IMR-90 (cell line): ENCODE measurements at regions of chr5 and their contacts with region 1.

Region 1: DNA sequence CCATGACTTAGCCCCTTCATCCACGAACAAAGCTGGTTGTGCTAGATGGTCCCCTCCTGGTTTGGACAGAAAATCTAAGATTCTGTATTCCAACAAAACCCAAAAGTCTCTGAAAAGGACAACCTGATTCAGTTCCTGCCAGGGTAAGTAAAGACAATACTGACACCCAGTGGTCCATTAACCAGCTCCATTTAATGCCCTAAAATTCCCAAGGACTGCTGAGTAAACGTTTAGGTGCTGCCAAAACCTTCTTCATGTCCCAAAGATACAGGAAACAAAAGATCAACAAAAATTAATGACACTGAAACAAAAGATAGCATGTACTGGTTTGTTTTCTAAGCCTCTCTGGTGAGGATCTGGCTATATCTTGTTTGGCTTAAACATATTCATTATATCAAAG is 25.3 kb upstream of the PPP1R2B start:
- DNase-seq: peak; percentile 58
- ATAC-seq: peak; percentile 86
- H3K4me3 ChIP-seq: no peak overlapping the region
- H3K27ac ChIP-seq: no peak overlapping the region
- H3K4me1 ChIP-seq: no peaks in the 10 kb centered on the region; the same call in 1 of the 2 replicates
- H3K27me3 ChIP-seq: no peaks in the 10 kb centered on the region; the same call in 1 of the 2 replicates
- CTCF ChIP-seq: peak; percentile 74
- POLR2A ChIP-seq: no peak
- RAD21 ChIP-seq: peak; percentile 78

Region 2: DNA sequence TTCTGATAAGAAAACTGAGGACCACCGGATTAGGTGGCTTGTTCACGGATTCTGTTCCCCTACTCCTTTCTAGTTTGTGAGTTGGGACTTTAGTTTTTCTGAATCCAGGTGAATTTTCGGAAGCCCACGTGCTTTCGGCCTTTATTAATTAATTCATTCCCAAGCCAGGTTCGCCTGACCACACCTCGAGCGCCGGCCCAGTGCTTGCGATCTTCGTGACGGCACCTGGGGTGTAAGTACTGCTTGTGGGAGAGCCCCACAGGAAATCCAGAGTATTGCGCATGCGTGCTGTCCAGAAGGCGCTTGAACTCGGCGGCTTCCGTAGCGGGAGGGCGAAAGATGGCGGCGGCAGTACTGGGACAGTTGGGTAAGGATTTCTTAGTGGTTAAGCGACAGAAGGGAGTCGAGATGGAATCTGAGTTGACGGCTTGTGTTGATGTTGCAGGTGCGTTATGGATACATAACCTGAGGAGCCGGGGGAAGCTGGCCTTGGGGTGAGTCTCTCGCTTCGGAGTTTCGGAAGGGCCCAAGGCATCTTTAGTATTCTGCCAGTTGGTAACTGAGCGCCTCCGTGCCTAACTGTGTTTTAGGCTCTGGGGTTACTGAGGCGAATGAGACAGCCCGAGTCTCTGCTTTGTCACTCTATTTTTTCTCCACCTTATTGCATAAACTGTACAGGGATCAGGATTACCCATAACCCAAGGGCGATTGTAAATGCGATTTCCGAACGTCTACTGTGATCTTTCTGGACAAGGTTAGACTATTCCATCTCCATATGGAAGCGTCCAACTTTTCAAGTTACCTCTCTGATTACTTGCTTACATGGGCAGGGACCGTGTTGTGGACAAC is 1883.8 kb before region 1 on chr5 and contains the start of gene MRPL22:
- CTCF ChIA-PET with region 1: no interaction called
- POLR2A ChIA-PET with region 1: no interaction called
- dilution Hi-C with region 1: no loop called
- in situ Hi-C with region 1: no loop called
- intact Hi-C with region 1: loop called (anchors 10 kb)
- DNase-seq: peak; percentile 93
- ATAC-seq: peak; percentile 60
- H3K4me3 ChIP-seq: peak within 1 kb of the TSS; percentile 86
- H3K27ac ChIP-seq: peak within 1 kb of the TSS; percentile 84
- H3K4me1 ChIP-seq: peaks cover 2% of the 10 kb centered on the region
- H3K27me3 ChIP-seq: no peaks in the 10 kb centered on the region
- CTCF ChIP-seq: no peak
- POLR2A ChIP-seq: 0 out of 2 replicates have a peak, but pooled peaks have one; percentile 48
- RAD21 ChIP-seq: no peak
- total RNA-seq, gene MRPL22: 13.3 and 21.7 TPM in 2 replicates

Region 3: GRCh38 chr5:154972476-154973080 is 1852.2 kb before region 1 on chr5:
- CTCF ChIA-PET with region 1: interaction called, 4 read pairs
- POLR2A ChIA-PET with region 1: no interaction called
- dilution Hi-C with region 1: no loop called
- in situ Hi-C with region 1: loop called (anchors 10 kb)
- intact Hi-C with region 1: loop called (anchors 10 kb)
- DNase-seq: peak; percentile 53
- ATAC-seq: peak; percentile 67
- H3K4me3 ChIP-seq: no peak overlapping the region
- H3K27ac ChIP-seq: no peak overlapping the region
- H3K4me1 ChIP-seq: peaks cover 1% of the 10 kb centered on the region; the same call in 1 of the 2 replicates
- H3K27me3 ChIP-seq: no peaks in the 10 kb centered on the region
- CTCF ChIP-seq: peak; percentile 67
- POLR2A ChIP-seq: no peak
- RAD21 ChIP-seq: peak; percentile 76

Region 4: DNA sequence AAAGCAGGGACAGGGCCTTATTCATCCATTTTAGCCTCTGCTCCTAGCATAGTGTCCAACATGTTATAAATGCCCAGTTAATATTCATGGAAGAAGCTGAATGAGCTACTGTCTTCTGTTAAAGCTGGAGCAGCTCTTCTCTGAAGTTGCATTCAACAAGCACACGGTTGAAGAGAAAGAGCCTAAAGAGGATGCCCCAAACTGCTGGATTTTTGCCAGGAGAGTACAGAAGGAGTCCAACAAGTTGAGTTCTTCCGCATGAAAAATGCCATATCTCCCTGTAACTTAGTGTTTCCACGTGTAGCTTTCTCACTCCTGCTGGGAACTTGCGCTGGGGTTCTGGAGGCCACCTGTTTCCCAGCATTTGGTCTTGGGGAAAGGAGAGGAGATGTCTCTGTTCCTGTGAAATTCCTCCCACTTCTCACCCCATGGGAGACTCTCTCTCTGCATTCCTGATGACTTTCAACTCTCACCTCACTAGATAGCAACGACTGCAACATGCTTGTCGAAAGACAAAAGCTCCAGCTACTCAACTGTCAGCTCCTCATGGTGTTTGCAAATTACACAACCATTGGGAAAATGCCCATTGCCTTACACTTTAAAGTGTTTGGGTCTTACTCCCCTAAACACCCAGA is 1688.5 kb before region 1 on chr5:
- CTCF ChIA-PET with region 1: interaction called, 8 read pairs
- POLR2A ChIA-PET with region 1: no interaction called
- dilution Hi-C with region 1: no loop called
- in situ Hi-C with region 1: loop called (anchors 5 kb)
- intact Hi-C with region 1: loop called (anchors 1 kb)
- DNase-seq: no peak
- ATAC-seq: no peak
- H3K4me3 ChIP-seq: no peak overlapping the region
- H3K27ac ChIP-seq: no peak overlapping the region
- H3K4me1 ChIP-seq: no peaks in the 10 kb centered on the region
- H3K27me3 ChIP-seq: no peaks in the 10 kb centered on the region
- CTCF ChIP-seq: no peak
- POLR2A ChIP-seq: no peak
- RAD21 ChIP-seq: no peak

Region 5: GRCh38 chr5:155616779-155617392 is 1207.9 kb before region 1 on chr5:
- CTCF ChIA-PET with region 1: interaction called, 5 read pairs
- POLR2A ChIA-PET with region 1: no interaction called
- dilution Hi-C with region 1: no loop called
- in situ Hi-C with region 1: no loop called
- intact Hi-C with region 1: loop called (anchors 1 kb)
- DNase-seq: no peak
- ATAC-seq: peak; percentile 44; the same call in 1 of the 2 replicates
- H3K4me3 ChIP-seq: no peak overlapping the region
- H3K27ac ChIP-seq: no peak overlapping the region
- H3K4me1 ChIP-seq: no peaks in the 10 kb centered on the region
- H3K27me3 ChIP-seq: no peaks in the 10 kb centered on the region
- CTCF ChIP-seq: peak; percentile 56
- POLR2A ChIP-seq: no peak
- RAD21 ChIP-seq: peak; percentile 72

Region 6: DNA sequence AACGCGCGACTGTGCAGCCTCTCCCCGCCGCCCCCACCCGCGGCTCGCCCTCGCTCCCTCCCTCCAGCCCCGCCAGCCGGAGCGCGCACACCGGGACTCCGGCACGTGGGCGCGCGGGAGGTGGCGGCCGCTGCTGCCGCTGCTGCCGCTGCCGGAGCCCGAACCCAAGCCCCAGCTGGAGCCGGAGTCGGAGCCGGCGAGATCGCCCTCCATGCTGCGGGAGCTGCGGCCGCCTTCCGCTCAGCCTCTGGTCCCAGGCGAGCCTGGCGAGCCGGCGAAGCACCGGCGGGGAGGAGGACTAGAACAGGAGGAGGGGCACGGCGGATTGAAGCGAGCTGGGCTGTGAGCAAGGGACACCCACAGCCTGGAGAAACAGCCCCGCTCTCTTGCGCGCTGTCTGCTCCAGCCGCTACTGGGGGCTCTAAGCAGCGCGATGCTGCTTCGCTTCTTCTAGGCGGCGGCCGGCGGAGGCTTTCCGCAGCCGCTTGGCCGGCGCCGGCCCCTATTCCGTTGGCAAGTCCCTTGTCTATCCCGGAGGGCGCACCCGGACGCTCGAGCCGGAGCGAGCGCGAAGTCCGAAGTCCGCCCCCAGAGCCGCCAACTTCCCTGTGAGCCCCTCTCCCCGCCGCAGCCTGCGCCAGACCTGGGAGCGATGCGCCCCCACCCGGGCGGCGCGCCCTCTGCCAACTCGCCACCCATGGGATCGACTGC is 1096.5 kb before region 1 on chr5:
- CTCF ChIA-PET with region 1: no interaction called
- POLR2A ChIA-PET with region 1: no interaction called
- dilution Hi-C with region 1: no loop called
- in situ Hi-C with region 1: no loop called
- intact Hi-C with region 1: loop called (anchors 10 kb)
- DNase-seq: peak; percentile 16
- ATAC-seq: peak; percentile 87
- H3K4me3 ChIP-seq: peak overlapping the region; percentile 37
- H3K27ac ChIP-seq: no peak overlapping the region
- H3K4me1 ChIP-seq: no peaks in the 10 kb centered on the region
- H3K27me3 ChIP-seq: peaks cover 27% of the 10 kb centered on the region
- CTCF ChIP-seq: no peak
- POLR2A ChIP-seq: no peak
- RAD21 ChIP-seq: no peak

Region 7: DNA sequence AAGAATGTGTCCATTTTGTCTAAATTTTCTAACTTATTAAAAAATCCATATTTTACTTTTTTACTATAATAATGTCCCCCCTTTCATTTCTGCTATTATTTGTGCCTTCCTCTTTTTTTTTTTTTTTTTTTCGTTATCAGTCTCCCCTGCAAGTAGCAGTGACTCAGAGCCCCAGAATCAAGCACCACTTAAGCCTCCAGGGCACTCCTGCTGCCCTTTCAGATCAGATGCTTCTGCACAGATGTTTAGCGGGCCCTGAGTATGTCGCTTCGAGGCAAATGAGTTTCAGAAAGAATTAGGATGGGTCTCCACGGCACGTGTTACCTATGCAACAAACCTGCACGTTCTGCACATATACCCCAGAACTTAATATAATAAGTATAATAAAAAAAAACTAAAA is 306.1 kb after region 1 on chr5:
- CTCF ChIA-PET with region 1: interaction called, 6 read pairs
- POLR2A ChIA-PET with region 1: no interaction called
- dilution Hi-C with region 1: no loop called
- in situ Hi-C with region 1: no loop called
- intact Hi-C with region 1: loop called (anchors 5 kb)
- DNase-seq: peak; percentile 21
- ATAC-seq: no peak
- H3K4me3 ChIP-seq: no peak overlapping the region
- H3K27ac ChIP-seq: no peak overlapping the region
- H3K4me1 ChIP-seq: no peaks in the 10 kb centered on the region
- H3K27me3 ChIP-seq: no peaks in the 10 kb centered on the region
- CTCF ChIP-seq: no peak
- POLR2A ChIP-seq: no peak
- RAD21 ChIP-seq: no peak